A673 (cell line): ENCODE measurements at regions of chr11 and their contacts with region 1.

Region 1: DNA sequence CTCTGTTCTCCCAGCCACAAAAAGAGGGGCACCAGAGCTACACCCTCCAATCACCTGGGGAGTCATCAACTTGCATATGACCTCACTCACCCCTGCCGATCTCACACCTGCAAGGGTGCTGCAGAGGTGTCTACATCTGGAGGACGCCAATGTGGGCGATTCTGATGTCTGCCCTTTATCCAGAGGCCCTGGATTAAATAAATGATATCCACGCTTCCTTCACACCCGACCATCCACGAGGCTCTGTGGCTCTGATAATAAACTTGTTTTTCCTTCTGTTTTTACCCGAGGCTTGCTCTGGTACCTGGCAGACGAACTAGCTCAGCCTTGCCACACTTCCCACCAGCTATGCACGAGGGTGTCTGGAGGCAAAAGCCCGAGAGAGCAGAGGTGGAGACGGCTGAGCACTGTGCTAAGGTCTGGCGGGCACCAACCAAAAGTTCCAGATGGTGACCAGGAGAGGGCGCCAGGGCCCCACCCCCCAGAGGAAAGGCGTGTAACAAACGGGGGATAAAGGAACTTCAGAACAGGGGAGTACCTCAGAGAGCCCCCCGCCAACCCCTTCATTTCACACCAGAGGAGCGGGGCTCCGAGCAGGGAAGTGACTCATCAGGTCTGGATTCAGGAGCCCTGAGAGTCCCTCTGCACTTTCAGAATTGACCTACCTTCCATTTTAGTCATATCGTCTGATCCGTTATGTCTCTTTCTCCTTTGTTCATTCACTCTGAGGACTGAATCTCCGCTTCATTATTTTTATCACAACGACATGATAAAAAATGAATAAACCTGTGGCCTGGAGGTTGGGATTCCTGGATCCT is 13.5 kb downstream of the SCN3B start:
- DNase-seq: peak; percentile 72
- H3K4me3 ChIP-seq: no peak overlapping the region
- H3K27ac ChIP-seq: no peak overlapping the region
- H3K4me1 ChIP-seq: no peaks in the 10 kb centered on the region
- H3K27me3 ChIP-seq: peaks cover 20% of the 10 kb centered on the region
- CTCF ChIP-seq: peak; percentile 98

Region 2: GRCh38 chr11:123707606-123708205 is 66.8 kb after region 1 on chr11:
- CTCF ChIA-PET with region 1: interaction called, 13 read pairs
- POLR2A ChIA-PET with region 1: no interaction called
- intact Hi-C with region 1: loop called (anchors 1 kb)
- DNase-seq: peak; percentile 87
- H3K4me3 ChIP-seq: no peak overlapping the region
- H3K27ac ChIP-seq: no peak overlapping the region
- H3K4me1 ChIP-seq: no peaks in the 10 kb centered on the region
- H3K27me3 ChIP-seq: no peaks in the 10 kb centered on the region
- CTCF ChIP-seq: peak; percentile 96

Region 3: GRCh38 chr11:123995119-123995518 is 354.2 kb after region 1 on chr11 and contains the start of gene OR10G6:
- CTCF ChIA-PET with region 1: interaction called, 16 read pairs
- POLR2A ChIA-PET with region 1: no interaction called
- intact Hi-C with region 1: no loop called
- DNase-seq: no peak
- H3K4me3 ChIP-seq: no peak within 1 kb of the TSS
- H3K27ac ChIP-seq: no peak within 1 kb of the TSS
- H3K4me1 ChIP-seq: no peaks in the 10 kb centered on the region
- H3K27me3 ChIP-seq: peaks cover 7% of the 10 kb centered on the region
- CTCF ChIP-seq: no peak
- total RNA-seq, gene OR10G6: not detected in 2 replicates